ENCODE measurements at regions of chr1 and their contacts with region 1.

Region 1: DNA sequence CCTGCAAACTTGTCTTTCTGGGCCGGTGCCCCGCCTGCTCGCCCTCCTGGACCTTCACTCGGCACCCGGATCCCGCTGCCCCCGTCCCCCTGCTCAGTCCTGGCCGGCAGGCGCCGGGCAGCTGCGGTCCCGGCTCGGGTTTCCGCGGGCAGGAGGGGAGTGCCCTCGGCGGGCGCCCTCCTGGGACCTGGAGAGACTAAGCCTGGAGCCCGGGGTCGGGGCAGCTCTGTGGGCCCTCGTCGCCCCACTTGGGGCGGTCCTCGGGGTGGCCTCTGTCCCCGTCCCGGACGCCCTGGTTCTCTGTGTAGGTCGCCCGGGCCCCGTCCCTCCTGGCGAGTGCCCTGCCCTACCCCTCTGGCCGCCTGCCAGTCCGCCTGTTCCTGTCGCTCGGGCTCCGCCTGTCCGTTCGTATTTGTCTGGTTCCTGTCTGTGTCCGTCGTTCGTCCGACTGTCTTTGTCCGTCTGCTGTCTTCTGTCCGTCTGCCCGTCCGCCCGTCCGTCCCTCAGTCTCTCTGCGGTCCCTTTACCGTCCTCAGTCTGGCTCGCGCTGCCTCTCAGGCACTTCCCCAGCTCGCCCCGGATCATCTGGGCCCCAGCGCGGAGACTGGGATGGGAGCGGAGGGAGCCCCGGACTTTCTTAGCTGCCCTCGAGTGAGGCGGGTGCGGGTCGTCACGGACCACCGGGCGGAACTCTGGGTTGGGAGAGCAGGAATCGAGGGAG is 552 bp downstream of the SERINC2 start:
- DNase-seq: peak; percentile 34 to 35
- H3K4me3 ChIP-seq: peak overlapping the region; percentile 35 to 40
- H3K27ac ChIP-seq: no peak overlapping the region
- H3K4me1 ChIP-seq: peaks cover 0 to 6% of the 10 kb centered on the region in 2 donors
- H3K27me3 ChIP-seq: peaks cover 4 to 10% of the 10 kb centered on the region in 2 donors
- CTCF ChIP-seq: no peak
- POLR2A ChIP-seq: no peak

Region 2: GRCh38 chr1:31182352-31182751 is 231.2 kb before region 1 on chr1:
- intact Hi-C with region 1: loop called (anchors 10 kb)
- DNase-seq: peak; percentile 27 to 62
- H3K4me3 ChIP-seq: no peak overlapping the region
- H3K27ac ChIP-seq: no peak overlapping the region
- H3K4me1 ChIP-seq: peaks cover 0 to 7% of the 10 kb centered on the region in 2 donors
- H3K27me3 ChIP-seq: peaks cover 0 to 5% of the 10 kb centered on the region in 2 donors
- CTCF ChIP-seq: peak in 1 of 4 experiments; percentile 4
- POLR2A ChIP-seq: no peak

Measured in uterus (tissue), 4 donors.